MCF 10A (cell line): ENCODE measurements at regions of chr7 and their contacts with region 1.

Region 1: GRCh38 chr7:157250605-157251228 is 86.1 kb upstream of the DNAJB6 start:
- DNase-seq: peak; percentile 71
- H3K4me3 Mint-ChIP-seq: no peak overlapping the region
- H3K27ac Mint-ChIP-seq: no peak overlapping the region
- H3K4me1 Mint-ChIP-seq: no peaks in the 10 kb centered on the region
- H3K27me3 Mint-ChIP-seq: no peaks in the 10 kb centered on the region
- CTCF ChIP-seq: peak; percentile 68

Region 2: DNA sequence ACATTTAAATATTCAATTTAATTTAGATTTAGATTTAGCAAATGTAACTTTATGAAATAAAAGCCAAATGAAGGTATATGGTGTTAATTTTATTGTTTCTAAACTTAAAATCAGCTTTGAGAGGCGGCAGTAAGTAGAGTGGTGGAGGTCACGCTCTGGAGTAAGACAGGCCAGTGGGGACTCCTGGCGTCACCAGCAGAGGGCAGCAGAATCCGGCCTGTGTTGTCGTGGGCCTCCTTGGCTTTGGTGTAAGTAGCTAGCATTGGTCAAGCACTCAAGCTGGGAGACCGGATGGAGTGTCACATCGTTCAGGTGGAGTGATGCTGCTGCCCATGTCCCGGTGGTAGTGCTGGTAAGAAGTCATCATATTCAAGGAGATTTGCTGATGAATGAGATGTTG is 12.6 kb before region 1 on chr7:
- CTCF ChIA-PET with region 1: interaction called, 37 read pairs
- POLR2A ChIA-PET with region 1: no interaction called
- intact Hi-C with region 1: no loop called
- DNase-seq: peak; percentile 50
- H3K4me3 Mint-ChIP-seq: no peak overlapping the region
- H3K27ac Mint-ChIP-seq: no peak overlapping the region
- H3K4me1 Mint-ChIP-seq: peaks cover 18% of the 10 kb centered on the region
- H3K27me3 Mint-ChIP-seq: no peaks in the 10 kb centered on the region
- CTCF ChIP-seq: peak; percentile 65

Region 3: DNA sequence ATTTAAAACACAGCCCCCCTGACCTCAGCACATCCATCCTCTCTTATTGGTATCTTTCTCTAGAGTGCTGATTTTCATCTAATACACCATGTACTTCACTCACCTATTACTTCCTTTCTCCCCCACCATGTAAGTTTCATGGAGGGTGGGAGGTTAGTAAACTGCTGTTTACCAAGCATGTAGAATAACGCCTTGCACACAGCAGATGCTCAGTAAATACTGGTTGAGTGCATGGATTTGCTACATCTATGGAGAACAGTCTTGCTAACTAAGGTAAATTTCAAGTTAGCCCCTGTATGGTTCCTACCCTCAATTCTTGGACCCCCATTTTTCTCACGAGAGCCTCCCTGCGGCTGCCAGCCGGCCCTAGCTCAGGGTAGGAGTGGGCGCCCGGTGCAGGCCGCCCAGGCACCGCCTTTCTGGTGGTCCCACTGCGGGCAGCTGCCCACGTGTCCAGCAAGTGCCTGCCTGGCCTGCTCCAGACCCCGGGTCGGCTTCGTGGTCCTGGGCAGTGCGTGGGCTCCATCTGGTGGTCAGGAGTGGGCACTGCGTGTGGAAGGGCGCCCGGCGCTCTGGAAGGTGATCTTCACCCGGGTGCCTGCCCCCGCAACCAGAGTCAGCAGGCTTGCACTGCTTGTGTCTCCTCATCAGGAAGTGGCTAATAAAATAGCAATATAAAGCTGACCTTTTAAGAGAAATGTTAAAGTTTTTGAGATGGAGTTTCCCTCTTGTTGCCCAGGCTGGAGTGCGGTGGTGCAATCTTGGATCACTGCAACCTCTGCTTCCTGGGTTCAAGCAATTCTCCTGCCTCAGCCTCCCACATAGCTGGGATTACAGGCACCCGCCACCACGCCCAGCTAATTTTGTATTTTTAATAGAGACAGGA is 22.7 kb after region 1 on chr7:
- CTCF ChIA-PET with region 1: interaction called, 19 read pairs
- POLR2A ChIA-PET with region 1: no interaction called
- intact Hi-C with region 1: no loop called
- DNase-seq: peak; percentile 67
- H3K4me3 Mint-ChIP-seq: peak overlapping the region; percentile 10
- H3K27ac Mint-ChIP-seq: peak overlapping the region; percentile 86
- H3K4me1 Mint-ChIP-seq: peaks cover 23% of the 10 kb centered on the region
- H3K27me3 Mint-ChIP-seq: no peaks in the 10 kb centered on the region
- CTCF ChIP-seq: peak; percentile 95